Pancreas (tissue), 10 donors: ENCODE measurements at regions of chr14 and their contacts with region 1.

Region 1: GRCh38 chr14:96741151-96741977 is 55.8 kb upstream of the VRK1 start:
- DNase-seq: peak; percentile 21 to 92 (median 66)
- ATAC-seq: peak; percentile 80 to 99 (median 96)
- H3K4me3 ChIP-seq: peak overlapping the region in 2 of 4 donors; percentile 22 to 48
- H3K27ac ChIP-seq: no peak overlapping the region
- H3K4me1 ChIP-seq: peaks cover 0 to 3% (median 0%) of the 10 kb centered on the region in 3 donors
- H3K27me3 ChIP-seq: peaks cover 0 to 15% (median 2%) of the 10 kb centered on the region in 4 donors
- CTCF ChIP-seq: peak; percentile 71 to 95 (median 88)

Region 2: DNA sequence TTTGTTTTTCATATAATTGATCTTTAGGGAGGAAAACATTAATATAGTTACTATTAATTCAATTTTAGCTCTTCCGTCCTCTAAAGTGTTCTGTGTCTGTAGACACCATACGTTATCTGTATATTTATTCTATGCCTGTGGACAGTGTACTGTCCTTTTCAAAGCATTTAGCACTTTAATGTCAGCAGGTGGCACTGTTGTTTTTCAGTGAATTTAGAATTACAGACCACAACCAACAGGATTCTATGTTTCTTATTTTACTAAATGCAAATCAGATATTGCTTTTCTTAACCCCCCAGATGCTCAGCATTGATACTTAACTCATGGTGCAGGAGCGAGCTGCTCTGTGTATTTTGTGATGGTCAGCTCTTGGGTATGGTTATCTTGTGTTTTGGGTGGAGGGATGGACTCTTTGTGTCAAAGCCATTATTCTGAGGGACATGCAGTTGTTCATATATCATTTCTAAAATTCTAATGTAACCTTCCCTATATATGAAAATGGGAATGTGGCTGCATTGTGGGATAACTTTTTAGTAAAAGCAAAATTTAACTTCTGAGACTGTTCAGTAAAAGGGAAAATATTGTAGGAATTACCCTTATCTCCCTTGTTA is 174.0 kb before region 1 on chr14:
- intact Hi-C with region 1: loop called in 1 of 3 experiments (anchors 5 kb)
- DNase-seq: no peak
- ATAC-seq: peak; percentile 43 to 72 (median 68)
- H3K4me3 ChIP-seq: no peak overlapping the region
- H3K27ac ChIP-seq: no peak overlapping the region
- H3K4me1 ChIP-seq: peaks cover 0 to 3% (median 0%) of the 10 kb centered on the region in 3 donors
- H3K27me3 ChIP-seq: no peaks in the 10 kb centered on the region
- CTCF ChIP-seq: peak in 2 of 4 donors; percentile 27 to 32

Region 3: GRCh38 chr14:96584199-96584906 is 157.0 kb before region 1 on chr14:
- intact Hi-C with region 1: loop called in 2 of 3 experiments (anchors 5 to 10 kb)
- DNase-seq: peak in 4 of 6 donors; percentile 34 to 73 (median 54)
- ATAC-seq: peak; percentile 65 to 95 (median 86)
- H3K4me3 ChIP-seq: no peak overlapping the region
- H3K27ac ChIP-seq: no peak overlapping the region
- H3K4me1 ChIP-seq: no peaks in the 10 kb centered on the region
- H3K27me3 ChIP-seq: peaks cover 0 to 3% (median 0%) of the 10 kb centered on the region in 4 donors
- CTCF ChIP-seq: peak in 2 of 4 donors; percentile 28 to 40